CD8-positive, alpha-beta T cell (primary cell): ENCODE measurements at regions of chr17 and their contacts with region 1.

Region 1: GRCh38 chr17:61946359-61946758 is 18.6 kb upstream of the INTS2 start:
- DNase-seq: no peak
- ATAC-seq: no peak
- H3K4me3 ChIP-seq: no peak overlapping the region
- H3K4me3 Mint-ChIP-seq: no peak overlapping the region
- H3K27ac ChIP-seq: no peak overlapping the region
- H3K27ac Mint-ChIP-seq: no peak overlapping the region
- H3K4me1 ChIP-seq: no peaks in the 10 kb centered on the region
- H3K4me1 Mint-ChIP-seq: no peaks in the 10 kb centered on the region
- H3K27me3 ChIP-seq: no peaks in the 10 kb centered on the region
- H3K27me3 Mint-ChIP-seq: no peaks in the 10 kb centered on the region
- CTCF ChIP-seq: no peak

Region 2: GRCh38 chr17:61897303-61898200 is 48.8 kb before region 1 on chr17:
- CTCF ChIA-PET with region 1: no interaction called
- POLR2A ChIA-PET with region 1: no interaction called
- intact Hi-C with region 1: loop called in 1 of 2 experiments (anchors 5 kb)
- DNase-seq: no peak
- ATAC-seq: no peak
- H3K4me3 ChIP-seq: no peak overlapping the region
- H3K4me3 Mint-ChIP-seq: no peak overlapping the region
- H3K27ac ChIP-seq: no peak overlapping the region
- H3K27ac Mint-ChIP-seq: no peak overlapping the region
- H3K4me1 ChIP-seq: no peaks in the 10 kb centered on the region
- H3K4me1 Mint-ChIP-seq: no peaks in the 10 kb centered on the region
- H3K27me3 ChIP-seq: no peaks in the 10 kb centered on the region
- H3K27me3 Mint-ChIP-seq: no peaks in the 10 kb centered on the region
- CTCF ChIP-seq: no peak